Cardiac septum (tissue), 1 donor: ENCODE measurements at regions of chr11 and their contacts with region 1.

Region 1: GRCh38 chr11:575996-576768 is at the start of gene PHRF1:
- DNase-seq: peak; percentile 98
- total RNA-seq, gene PHRF1: 20.9 TPM

Region 2: DNA sequence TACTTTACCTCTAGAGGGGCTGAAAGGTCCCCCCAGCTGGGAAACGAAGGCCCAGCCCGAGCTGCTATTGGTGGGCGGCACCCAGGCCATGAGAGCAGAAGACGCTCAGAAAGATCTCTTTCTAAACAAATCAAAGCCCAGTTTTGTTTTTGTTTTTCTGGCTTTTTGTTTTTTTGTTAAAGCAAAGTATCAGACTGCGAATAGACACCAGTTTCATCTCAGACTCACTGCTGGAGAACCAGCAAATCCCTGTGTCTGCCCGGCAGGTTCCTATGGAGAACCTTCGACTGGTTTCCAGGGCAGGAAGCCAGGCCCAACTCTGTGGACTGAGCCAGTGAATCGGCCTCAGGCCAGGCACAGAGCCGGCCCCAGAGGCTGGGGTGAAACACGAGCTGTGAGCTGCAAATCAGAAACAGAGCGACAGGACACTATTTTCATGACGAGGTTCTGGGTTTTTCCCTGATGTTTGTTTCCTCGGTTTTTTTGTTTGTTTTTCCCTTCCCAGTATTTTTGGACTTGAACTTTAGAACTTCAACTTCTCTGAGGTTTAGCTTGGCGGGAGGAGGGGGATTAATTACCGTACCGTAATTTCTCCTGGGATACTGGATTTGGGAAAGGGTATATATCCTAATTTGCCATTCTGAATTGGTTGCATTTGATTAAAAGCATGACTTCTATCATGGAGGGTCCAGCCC is 222.9 kb before region 1 on chr11:
- intact Hi-C with region 1: no loop called
- DNase-seq: peak; percentile 91

Region 3: DNA sequence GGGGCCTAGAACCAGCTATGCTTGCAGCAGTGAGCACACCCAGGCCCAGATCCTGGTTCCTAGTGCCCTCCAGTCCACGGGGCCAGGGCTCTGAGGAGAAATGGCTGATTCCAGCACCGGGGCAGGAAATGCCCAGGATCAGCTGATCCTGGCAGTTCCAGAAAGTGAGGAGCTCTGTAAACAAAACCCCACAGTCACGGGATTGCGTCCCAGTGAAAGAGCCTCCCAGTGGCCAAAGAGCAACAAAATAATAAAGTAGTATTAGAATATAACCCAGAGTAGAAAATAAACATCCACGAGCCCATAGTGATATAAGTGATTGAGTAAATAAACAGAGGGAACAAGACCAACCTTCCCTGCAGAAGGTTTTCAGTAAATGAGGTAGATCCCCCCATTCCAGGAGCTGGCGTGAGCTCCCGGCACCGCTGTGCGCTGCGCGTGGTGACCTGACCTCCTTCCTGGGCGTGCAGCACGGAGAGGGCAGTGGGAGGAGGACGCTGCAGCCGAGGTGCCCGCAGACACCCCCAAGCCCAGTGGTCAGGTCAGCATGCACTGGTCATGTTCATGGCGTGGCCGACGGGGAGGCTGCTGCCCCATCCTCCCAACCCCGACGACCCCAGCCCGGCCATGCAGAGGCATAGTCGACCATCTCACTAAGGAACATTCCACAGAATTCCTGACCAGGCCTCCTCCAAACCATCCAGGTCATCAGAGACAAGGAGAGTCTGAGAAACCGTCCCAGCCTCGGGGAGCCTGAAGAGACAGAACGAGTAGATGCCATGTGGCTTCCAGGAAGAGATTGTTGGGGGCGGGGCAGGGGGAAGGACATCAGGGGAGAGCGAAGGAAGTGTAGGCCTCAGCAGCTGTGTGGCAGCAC is 106.3 kb before region 1 on chr11:
- intact Hi-C with region 1: no loop called
- DNase-seq: no peak

Region 4: DNA sequence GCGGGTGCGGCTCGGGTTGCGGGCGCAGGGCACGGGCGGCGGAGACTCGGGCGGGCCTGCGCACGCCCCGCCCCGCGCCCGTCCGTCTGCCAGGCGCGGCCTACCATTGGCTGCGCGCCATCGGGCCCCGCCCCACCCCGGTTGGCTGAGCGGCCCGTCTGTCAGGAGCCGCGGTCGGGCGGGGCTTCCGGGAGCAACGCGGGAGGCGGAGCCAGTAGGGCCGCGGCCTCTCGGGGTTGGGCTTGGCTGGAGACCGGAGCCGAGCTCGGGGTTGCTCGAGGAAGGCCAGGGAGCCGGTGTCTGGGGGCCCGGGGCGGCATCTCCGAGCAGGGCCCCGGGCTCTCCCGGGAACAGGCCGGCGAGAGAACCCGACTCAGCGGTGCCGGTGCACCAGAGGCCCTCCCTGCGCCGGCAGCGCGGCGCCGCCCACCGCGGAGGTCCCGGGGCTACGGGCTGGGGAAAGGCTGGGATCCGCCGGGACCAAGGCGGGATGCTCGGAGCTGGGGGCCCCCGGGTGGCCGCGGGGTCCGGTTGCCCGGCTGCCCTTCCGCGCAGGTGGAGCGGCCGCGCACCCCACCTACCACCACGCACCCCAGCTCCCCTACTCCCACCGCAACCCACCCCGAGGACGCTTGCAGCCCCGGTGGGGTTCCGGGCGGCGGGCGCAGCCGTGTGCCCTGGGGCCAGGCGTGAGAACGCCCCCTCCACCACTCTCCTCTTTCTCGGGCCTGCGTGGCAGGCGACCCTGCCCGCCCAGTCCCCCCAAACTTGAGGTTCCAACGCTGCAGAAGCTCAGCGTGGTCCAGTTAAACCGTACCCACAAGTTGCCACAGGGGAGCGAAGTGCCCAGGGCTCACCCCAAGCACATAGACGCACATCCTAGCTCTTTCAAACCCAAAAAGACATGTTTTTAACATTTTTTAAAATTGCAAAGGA is 40.4 kb before region 1 on chr11 and contains the start of gene HRAS:
- intact Hi-C with region 1: loop called (anchors 1 kb)
- DNase-seq: peak; percentile 97
- total RNA-seq, gene HRAS: 75.9 TPM

Region 5: DNA sequence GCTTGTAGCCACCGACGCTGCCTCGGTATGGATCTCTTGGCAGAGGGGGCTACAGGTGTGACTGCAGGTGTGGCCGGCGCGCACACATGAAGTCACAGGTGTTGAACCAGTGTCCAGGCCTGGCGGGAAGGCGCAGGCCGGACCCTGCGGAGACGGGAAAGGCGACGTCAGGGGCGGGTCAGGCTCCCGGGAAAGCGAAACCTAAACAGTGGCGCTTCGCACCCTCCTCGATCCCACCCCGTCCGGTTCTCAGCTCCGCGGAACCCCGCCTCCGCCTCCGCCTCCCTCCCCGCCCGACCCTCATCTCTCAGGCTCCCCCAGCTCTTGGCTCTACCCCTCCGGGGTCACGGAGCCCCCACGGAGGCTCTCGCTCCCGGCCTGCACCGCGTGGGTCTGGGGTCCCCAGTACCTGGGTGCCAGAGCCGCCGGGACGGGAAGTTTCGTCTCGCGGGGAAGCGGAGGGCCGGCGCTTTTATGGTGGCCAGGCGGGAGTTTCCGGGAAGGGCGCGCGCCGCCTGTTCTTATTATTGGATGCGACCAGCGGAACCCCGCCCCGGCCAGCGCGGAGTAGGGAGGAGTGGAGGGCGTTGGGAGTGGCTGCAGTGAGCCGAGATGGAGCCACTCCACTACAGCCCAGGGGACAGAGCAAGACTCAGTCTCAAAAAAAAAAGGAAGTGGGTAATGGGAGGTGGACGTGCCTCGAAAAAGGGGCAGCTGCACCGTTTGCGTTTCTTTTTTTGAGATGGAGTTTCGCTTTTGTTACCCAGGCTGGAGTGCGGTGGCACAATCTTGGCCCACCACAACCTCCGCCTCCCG is 39.5 kb after region 1 on chr11 and contains the start of gene IRF7:
- intact Hi-C with region 1: loop called (anchors 5 kb)
- DNase-seq: peak; percentile 98
- total RNA-seq, gene IRF7: 9.7 TPM